BJ (cell line): ENCODE measurements at regions of chr7 and their contacts with region 1.

Region 1: DNA sequence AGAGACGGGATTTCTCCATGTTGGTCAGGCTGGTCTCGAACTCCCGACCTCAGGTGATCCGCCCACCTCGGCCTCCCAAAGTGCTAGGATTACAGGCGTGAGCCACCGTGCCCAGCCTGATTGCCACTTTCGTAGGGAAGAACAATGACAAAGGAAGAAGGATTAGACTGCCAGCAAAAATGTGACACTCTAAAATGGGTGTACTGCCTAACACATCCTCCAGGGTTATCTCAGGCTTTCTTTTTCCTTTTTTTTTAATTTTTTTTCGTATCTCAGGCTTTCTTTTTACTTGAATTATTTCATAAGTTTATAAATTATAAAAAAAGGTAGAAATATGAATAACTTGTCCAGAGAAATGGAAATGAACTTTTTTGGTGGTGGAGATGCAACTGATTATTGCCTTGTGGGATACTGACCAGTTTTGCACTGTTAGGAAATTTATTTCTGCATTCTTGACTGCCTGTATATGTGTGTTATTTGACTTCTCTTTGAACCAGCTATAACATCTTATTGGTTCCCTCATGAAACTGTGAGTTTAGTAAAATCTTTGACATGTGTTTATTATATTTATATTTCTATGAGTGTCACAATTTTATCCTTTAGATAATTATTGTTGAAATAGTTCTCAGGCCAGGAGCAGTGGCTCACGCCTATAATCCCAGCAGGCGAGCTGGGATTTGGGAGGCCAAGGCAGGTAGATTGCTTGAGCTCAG is 56.8 kb downstream of the XRCC2 start:
- DNase-seq: no peak
- H3K4me3 ChIP-seq: no peak overlapping the region
- H3K27me3 ChIP-seq: no peaks in the 10 kb centered on the region
- CTCF ChIP-seq: no peak

Region 2: DNA sequence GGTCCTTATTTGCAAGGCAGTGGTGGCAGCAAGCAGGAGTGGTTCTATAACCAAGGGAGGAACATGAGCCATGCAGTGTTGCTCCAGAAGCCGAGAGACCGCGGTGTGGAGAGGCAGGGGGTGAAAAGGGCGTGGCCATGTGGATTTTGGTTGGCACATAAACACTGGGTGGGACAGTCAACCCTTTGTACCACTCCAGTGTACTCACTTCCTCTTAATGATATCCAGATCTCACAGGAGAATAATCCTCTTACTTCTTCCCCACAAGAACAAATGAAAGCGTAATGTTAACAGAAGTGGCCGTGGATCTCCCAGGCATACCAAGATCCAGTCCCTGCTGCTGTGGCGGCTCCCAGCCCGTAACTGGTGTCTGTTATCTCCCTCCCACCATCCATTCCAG is 14.3 kb after region 1 on chr7:
- CTCF ChIA-PET with region 1: no interaction called
- POLR2A ChIA-PET with region 1: no interaction called
- DNase-seq: no peak
- H3K4me3 ChIP-seq: no peak overlapping the region
- H3K27me3 ChIP-seq: no peaks in the 10 kb centered on the region
- CTCF ChIP-seq: no peak

Region 3: GRCh38 chr7:152643979-152644559 is 24.9 kb after region 1 on chr7:
- CTCF ChIA-PET with region 1: no interaction called
- POLR2A ChIA-PET with region 1: interaction called, 18 read pairs
- DNase-seq: no peak
- H3K4me3 ChIP-seq: no peak overlapping the region
- H3K27me3 ChIP-seq: no peaks in the 10 kb centered on the region
- CTCF ChIP-seq: no peak